Dorsolateral prefrontal cortex (tissue), 120 donors: ENCODE measurements at regions of chr5 and their contacts with region 1.

Region 1: GRCh38 chr5:111762895-111763294 is 5.9 kb upstream of the NREP start:
- DNase-seq: no peak
- H3K4me3 ChIP-seq: no peak overlapping the region
- H3K27ac ChIP-seq: no peak overlapping the region
- H3K27me3 ChIP-seq: no peaks in the 10 kb centered on the region
- CTCF ChIP-seq: no peak

Region 2: DNA sequence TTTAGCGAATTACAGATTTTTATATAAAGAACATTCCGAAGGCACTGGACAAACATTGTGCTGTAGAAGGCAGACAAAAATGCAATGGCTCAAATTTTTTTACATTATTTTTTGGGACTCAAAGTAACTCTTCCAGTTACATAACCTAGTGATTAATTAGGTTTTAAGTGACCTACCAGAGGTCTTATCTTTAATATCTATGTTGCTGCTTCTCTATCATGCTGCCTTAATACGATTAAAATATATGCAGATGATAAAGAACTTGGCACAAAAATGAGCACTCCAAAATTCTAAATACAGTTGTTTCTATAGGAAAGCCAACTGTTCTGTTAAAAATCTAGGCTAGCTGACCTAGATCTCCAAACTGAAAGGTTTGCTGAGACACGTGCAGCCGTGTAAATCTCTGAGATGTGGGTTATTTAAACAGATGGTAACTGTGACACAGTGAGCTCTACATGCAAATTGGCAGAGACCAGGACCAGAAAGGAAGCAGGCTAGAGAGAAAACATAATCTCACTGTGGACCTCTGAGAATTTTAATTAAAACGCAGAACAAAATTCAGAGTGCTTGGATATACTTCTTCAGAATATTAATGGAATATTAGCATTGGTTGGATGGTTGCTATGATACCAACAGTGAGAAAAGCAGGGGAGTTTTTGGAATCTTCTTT is 482.5 kb before region 1 on chr5:
- intact Hi-C with region 1: no loop called
- DNase-seq: peak in 5 of 10 donors; percentile 10 to 71 (median 38)
- H3K4me3 ChIP-seq: peak overlapping the region in 8 of 59 donors; percentile 0 to 34 (median 7)
- H3K27ac ChIP-seq: peak overlapping the region in 50 of 59 donors; percentile 9 to 86 (median 46)
- H3K27me3 ChIP-seq: no peaks in the 10 kb centered on the region
- CTCF ChIP-seq: no peak

Region 3: DNA sequence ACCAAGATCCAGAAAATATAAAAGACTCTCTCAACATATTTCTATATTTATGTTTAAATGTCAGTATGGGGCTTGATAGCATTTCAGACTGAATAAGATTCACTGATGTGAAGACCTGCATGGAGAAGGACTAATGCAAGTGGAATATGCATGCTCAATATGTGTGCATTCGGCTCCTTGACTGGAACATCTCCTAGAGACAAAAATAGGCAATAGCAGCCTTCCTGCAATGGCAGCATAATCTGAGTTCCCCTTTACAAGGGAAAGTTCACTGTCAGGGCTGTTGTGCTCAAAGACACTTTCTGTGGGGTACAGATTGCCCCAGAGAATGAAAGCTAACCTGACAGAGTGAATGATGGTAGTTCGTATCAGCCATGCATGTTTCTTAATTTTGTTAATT is 293.0 kb before region 1 on chr5:
- intact Hi-C with region 1: no loop called
- DNase-seq: no peak
- H3K4me3 ChIP-seq: no peak overlapping the region
- H3K27ac ChIP-seq: no peak overlapping the region
- H3K27me3 ChIP-seq: no peaks in the 10 kb centered on the region
- CTCF ChIP-seq: no peak

Region 4: GRCh38 chr5:111550279-111551020 is 212.4 kb before region 1 on chr5:
- intact Hi-C with region 1: loop called in 1 of 2 experiments (anchors 10 kb)
- DNase-seq: peak in 9 of 10 donors; percentile 48 to 83 (median 57)
- H3K4me3 ChIP-seq: no peak overlapping the region
- H3K27ac ChIP-seq: peak overlapping the region in 9 of 59 donors; percentile 4 to 53 (median 21)
- H3K27me3 ChIP-seq: no peaks in the 10 kb centered on the region
- CTCF ChIP-seq: peak; percentile 38 to 88 (median 75)

Region 5: DNA sequence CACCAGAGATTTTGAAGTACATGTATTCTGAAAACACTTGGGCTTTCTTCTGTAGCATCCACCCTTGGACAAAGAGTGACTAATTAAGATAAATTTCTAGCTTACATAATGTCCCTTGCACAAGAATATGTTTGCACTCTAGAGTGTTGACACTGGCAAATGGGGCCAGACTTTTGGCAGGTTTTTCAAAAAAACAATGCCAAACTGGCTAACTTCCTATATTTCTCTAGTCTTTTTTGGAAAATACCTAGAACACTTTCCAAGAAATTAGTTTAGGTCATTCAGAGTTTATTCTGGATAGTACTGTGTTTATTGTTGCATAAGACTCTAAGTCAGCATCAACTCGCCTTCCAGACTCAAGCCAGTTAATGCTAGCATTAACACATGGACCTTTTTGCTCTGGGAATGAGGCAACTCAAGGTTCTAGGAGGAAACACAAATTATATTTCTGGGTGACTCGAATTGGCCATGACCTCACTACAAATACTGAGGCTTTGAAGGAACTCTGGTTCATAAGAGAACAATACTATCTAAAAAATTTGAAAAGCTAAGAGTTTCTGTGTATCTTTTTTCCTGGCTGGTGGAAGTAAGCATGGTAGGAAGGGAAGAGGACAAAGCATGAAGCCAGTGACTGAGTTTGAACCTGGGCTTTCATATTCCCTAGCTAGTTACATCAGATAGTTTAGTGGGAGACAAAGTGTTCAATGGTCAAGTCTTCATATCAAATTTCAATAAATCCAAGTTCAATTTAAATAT is 107.5 kb before region 1 on chr5:
- intact Hi-C with region 1: no loop called
- DNase-seq: no peak
- H3K4me3 ChIP-seq: no peak overlapping the region
- H3K27ac ChIP-seq: no peak overlapping the region
- H3K27me3 ChIP-seq: peaks cover 0 to 3% (median 0%) of the 10 kb centered on the region in 45 donors
- CTCF ChIP-seq: no peak

Region 6: GRCh38 chr5:111976705-111977435 is 214.0 kb after region 1 on chr5:
- intact Hi-C with region 1: no loop called
- DNase-seq: no peak
- H3K4me3 ChIP-seq: no peak overlapping the region
- H3K27ac ChIP-seq: no peak overlapping the region
- H3K27me3 ChIP-seq: peaks cover 0 to 2% (median 0%) of the 10 kb centered on the region in 45 donors
- CTCF ChIP-seq: no peak